ENCODE measurements at regions of chr19 and their contacts with region 1.

Region 1: DNA sequence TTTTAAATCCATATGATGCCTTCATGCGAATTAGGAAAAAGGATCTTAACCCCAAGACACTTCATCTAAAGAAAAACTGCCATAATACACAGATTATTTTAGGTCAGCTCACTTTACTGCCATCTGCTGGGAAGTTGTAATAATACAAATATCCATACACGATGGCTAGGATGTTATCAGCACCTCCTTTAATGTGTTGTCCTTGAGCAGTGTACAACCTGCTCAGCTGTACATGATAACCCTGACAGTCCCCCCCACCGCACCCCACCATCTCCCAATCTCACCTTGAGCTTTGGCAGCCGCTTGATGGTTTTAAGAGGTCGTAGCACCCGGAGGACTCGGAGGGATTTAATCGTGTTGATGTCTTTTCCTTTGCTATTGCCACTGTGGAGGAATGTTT is 112.2 kb downstream of the IER2 start:
- DNase-seq: no peak
- ATAC-seq: peak in 1 of 2 donors; percentile 64

Region 2: GRCh38 chr19:12974301-12975220 is 287.9 kb before region 1 on chr19:
- intact Hi-C with region 1: loop called (anchors 2 to 5 kb)
- DNase-seq: no peak
- ATAC-seq: no peak

Region 3: GRCh38 chr19:12979974-12980373 is 282.5 kb before region 1 on chr19:
- intact Hi-C with region 1: loop called (anchors 2 to 5 kb)
- DNase-seq: no peak
- ATAC-seq: no peak

Region 4: GRCh38 chr19:13093407-13094105 is 168.9 kb before region 1 on chr19:
- intact Hi-C with region 1: loop called in 1 of 2 experiments (anchors 10 kb)
- DNase-seq: peak; percentile 89
- ATAC-seq: peak; percentile 51 to 59

Region 5: DNA sequence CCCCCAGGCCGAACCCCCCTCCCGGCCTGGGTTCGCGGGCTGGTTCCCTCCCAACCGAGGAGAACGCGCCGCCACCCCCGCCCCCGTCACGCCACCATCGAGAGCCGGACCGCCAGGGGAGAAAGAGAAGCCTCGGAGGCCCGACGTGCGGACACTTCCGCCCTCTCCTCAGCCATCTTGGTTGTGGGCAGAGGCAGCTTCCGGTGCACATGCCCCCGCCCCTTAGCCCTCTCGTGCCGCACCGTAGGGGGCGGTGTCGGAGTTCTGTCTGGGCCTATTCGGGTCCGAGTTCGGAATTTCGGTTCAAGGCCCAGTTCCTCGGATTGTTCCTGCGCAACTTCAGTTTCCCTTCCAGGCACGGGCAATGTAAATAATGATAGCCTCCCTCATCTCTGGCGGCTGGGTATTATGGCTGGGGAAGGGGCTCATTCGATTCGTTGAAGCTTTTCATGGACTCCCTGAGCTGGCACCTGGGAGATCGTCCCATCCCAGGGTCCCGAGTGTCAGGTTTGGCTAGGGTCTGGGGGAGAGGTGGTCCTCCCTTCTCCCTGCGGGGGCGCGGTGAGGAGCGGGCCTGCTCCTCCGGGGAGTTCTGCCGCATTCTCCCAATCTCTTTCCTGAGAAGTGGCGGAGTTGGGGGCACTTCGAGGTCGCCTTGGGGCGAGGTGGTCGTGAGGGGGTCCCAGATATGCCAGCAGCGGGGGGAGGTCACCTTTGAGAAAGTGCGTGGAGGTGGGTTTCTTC is 112.1 kb before region 1 on chr19 and contains the starts of genes IER2 and STX10:
- intact Hi-C with region 1: loop called in 1 of 2 experiments (anchors 5 kb)
- DNase-seq: peak; percentile 97
- ATAC-seq: peak; percentile 68 to 70
- total RNA-seq, gene IER2: 36.9 to 61.3 TPM
- total RNA-seq, gene STX10: 30.0 to 36.1 TPM

Region 6: GRCh38 chr19:13190781-13191540 is 71.5 kb before region 1 on chr19:
- intact Hi-C with region 1: loop called in 1 of 2 experiments (anchors 5 kb)
- DNase-seq: no peak
- ATAC-seq: no peak

Region 7: GRCh38 chr19:13215546-13216380 is 46.7 kb before region 1 on chr19:
- intact Hi-C with region 1: no loop called
- DNase-seq: no peak
- ATAC-seq: no peak

Measured in left cardiac atrium (tissue), 4 donors.